GM12878 (cell line): ENCODE measurements at regions of chr20 and their contacts with region 1.

Region 1: GRCh38 chr20:22453239-22454080 is 130.9 kb downstream of the FOXA2 start:
- DNase-seq: no peak
- ATAC-seq: no peak
- H3K4me3 ChIP-seq: no peak overlapping the region
- H3K27ac ChIP-seq: no peak overlapping the region
- H3K4me1 ChIP-seq: no peaks in the 10 kb centered on the region
- H3K27me3 ChIP-seq: no peaks in the 10 kb centered on the region; a peak in 1 of 4 replicates
- CTCF ChIP-seq: peak in 2 of 3 experiments; percentile 9 to 18; a peak in 1 of 6 replicates
- EP300 ChIP-seq: no peak
- POLR2A ChIP-seq: no peak
- RAD21 ChIP-seq: no peak

Region 2: GRCh38 chr20:22403632-22404361 is 49.7 kb before region 1 on chr20:
- CTCF ChIA-PET with region 1: no interaction called
- POLR2A ChIA-PET with region 1: no interaction called
- RAD21 ChIA-PET with region 1: no interaction called
- SMC1A ChIA-PET with region 1: no interaction called
- in situ Hi-C with region 1: loop called (anchors 5 kb)
- intact Hi-C with region 1: no loop called
- DNase-seq: no peak
- ATAC-seq: no peak
- H3K4me3 ChIP-seq: peak overlapping the region; percentile 50
- H3K27ac ChIP-seq: no peak overlapping the region
- H3K4me1 ChIP-seq: no peaks in the 10 kb centered on the region; the same call in 1 of the 2 replicates
- H3K27me3 ChIP-seq: no peaks in the 10 kb centered on the region
- CTCF ChIP-seq: no peak
- EP300 ChIP-seq: no peak
- POLR2A ChIP-seq: no peak
- RAD21 ChIP-seq: no peak

Region 3: DNA sequence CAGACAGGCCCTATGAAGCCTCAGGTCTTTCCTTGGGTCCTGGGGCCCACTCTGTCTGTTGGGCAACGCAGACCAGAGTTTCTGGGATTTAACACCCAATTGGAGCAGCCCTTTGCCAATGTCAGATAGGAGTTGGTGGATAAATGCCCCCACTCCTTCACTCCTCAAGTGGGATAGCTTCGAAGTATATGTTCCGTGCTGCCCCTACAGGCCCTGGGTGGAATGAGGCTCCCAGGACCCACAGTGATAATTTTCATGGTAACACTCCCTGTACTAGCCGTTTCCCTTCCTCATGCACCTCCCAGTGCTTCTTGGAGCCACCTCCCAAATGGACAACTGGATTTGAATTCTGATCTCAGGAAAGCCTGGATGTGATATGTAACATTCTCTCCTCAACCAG is 14.5 kb before region 1 on chr20:
- CTCF ChIA-PET with region 1: no interaction called
- POLR2A ChIA-PET with region 1: no interaction called
- RAD21 ChIA-PET with region 1: no interaction called
- SMC1A ChIA-PET with region 1: no interaction called
- in situ Hi-C with region 1: no loop called
- intact Hi-C with region 1: no loop called
- DNase-seq: no peak
- ATAC-seq: peak; percentile 66
- H3K4me3 ChIP-seq: no peak overlapping the region
- H3K27ac ChIP-seq: no peak overlapping the region
- H3K4me1 ChIP-seq: no peaks in the 10 kb centered on the region
- H3K27me3 ChIP-seq: no peaks in the 10 kb centered on the region; a peak in 1 of 4 replicates
- CTCF ChIP-seq: peak; percentile 11 to 27 (median 27); a peak in 3 of 6 replicates
- EP300 ChIP-seq: no peak
- POLR2A ChIP-seq: no peak
- RAD21 ChIP-seq: no peak